Endothelial cell of umbilical vein (primary cell): ENCODE measurements at regions of chr1 and their contacts with region 1.

Region 1: DNA sequence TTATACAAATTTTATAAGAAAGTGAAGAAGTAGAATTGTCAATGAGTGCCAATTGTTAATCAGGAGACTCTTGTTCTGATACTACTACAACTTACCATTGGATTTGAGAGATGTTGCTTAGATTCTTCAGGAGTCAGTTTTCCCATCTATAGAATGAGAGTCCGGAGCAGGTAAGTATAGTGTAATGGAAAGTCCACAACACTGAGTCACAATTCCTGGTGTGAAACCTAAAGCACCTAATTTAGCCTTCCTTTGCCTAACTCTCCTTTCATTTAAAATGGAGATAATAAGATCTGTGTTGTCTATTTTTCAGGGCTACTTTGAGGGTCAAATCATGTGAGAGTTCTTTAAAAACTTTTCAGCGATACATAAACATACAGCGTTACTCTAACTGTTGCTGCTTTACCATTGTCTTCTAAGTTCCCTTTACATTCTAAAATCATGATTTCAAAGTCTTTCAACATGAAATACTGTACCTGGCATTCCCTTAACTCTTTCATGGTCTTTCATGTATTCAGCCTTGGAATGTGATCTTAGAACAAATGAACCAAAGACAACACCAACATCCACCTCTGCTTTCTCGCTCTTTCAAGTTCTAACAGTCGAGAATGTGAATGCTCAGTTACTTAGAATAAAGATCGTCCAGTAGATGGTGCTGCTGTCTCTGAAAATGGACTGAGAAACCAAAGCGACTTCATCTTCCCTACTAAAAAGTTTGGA is 90.9 kb downstream of the SLC30A10 start:
- DNase-seq: peak; percentile 55
- H3K4me3 ChIP-seq: no peak overlapping the region
- H3K27ac ChIP-seq: no peak overlapping the region
- H3K4me1 ChIP-seq: no peaks in the 10 kb centered on the region
- H3K27me3 ChIP-seq: no peaks in the 10 kb centered on the region
- CTCF ChIP-seq: peak; percentile 19 to 29
- POLR2A ChIP-seq: no peak

Region 2: GRCh38 chr1:219959540-219960203 is 122.2 kb after region 1 on chr1:
- CTCF ChIA-PET with region 1: no interaction called
- POLR2A ChIA-PET with region 1: no interaction called
- dilution Hi-C with region 1: no loop called
- intact Hi-C with region 1: loop called (anchors 10 kb)
- DNase-seq: no peak
- H3K4me3 ChIP-seq: no peak overlapping the region
- H3K27ac ChIP-seq: no peak overlapping the region
- H3K4me1 ChIP-seq: no peaks in the 10 kb centered on the region
- H3K27me3 ChIP-seq: no peaks in the 10 kb centered on the region
- CTCF ChIP-seq: no peak
- POLR2A ChIP-seq: no peak

Region 3: GRCh38 chr1:220099826-220100225 is 262.4 kb after region 1 on chr1:
- CTCF ChIA-PET with region 1: no interaction called
- POLR2A ChIA-PET with region 1: no interaction called
- dilution Hi-C with region 1: no loop called
- intact Hi-C with region 1: loop called (anchors 10 kb)
- DNase-seq: peak; percentile 23
- H3K4me3 ChIP-seq: no peak overlapping the region
- H3K27ac ChIP-seq: no peak overlapping the region
- H3K4me1 ChIP-seq: peaks cover 3% of the 10 kb centered on the region
- H3K27me3 ChIP-seq: no peaks in the 10 kb centered on the region
- CTCF ChIP-seq: no peak
- POLR2A ChIP-seq: no peak